Left cardiac atrium (tissue), 4 donors: ENCODE measurements at regions of chr4 and their contacts with region 1.

Region 1: DNA sequence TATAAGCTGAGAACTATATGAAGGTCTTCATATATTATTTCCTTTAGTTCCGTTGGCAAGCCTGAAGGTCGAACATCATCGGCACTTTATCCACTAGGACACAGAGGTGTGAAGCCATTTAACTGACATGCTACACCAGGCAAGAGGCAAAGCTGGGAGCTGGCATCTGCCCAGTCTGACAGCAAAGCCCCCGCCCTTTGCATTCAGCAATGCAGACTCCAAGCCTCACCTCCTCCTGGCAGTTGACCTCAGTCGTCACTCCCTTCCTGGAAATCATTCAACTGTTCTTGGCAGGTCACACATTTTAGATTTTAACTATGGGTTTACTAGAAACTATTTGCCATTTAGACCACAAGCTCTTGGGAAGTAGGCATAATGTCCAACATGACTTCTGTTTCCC is 135.8 kb upstream of the FRG1 start:
- DNase-seq: peak; percentile 70
- ATAC-seq: peak; percentile 72 to 84

Region 2: DNA sequence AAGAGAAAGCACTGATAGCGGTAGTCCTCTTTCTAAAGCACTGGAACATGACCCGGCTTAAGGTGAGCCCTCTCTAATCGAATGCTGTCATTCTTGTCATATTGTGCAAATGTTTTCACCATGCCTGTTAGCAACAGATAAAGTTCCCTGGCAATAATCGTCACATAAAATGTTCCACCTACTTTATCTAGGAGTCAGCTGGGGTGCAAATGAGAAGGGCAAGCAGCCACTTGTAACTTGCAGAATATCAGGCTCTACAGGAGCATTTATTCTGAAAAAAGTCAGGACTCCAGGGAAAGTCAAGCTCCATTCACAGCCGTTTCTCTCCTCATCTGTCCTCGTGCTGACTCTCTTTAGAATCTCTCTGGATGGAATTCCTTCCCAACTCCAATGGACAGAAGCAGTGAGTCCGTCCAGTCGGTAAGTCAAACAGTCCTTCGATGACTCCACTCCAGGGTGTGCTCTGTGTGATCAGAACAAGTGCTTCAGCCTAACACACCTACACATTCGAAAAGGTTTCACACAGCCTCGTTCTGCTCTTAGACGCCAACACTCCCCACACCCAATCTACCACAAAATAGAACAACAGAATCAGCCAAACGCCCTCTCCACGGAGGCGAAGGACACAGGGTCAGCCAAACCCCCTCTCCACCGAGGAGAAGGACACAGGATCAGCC is 34.1 kb after region 1 on chr4:
- intact Hi-C with region 1: loop called in 1 of 2 experiments (anchors 2 kb)
- DNase-seq: no peak
- ATAC-seq: peak; percentile 30 to 59